Activated CD4-positive, alpha-beta memory T cell treated with anti-CD3 and anti-CD28 coated beads for 36 hours (primary cell): ENCODE measurements at regions of chr6 and their contacts with region 1.

Region 1: GRCh38 chr6:31795616-31796298 is at the start of gene VARS1:
- DNase-seq: peak; percentile 91
- H3K4me3 Mint-ChIP-seq: peak within 1 kb of the TSS; percentile 98
- H3K27ac Mint-ChIP-seq: peak within 1 kb of the TSS; percentile 91
- H3K4me1 Mint-ChIP-seq: peaks cover 39% of the 10 kb centered on the region
- H3K27me3 Mint-ChIP-seq: no peaks in the 10 kb centered on the region
- total RNA-seq, gene VARS1: 141 to 153 TPM

Region 2: DNA sequence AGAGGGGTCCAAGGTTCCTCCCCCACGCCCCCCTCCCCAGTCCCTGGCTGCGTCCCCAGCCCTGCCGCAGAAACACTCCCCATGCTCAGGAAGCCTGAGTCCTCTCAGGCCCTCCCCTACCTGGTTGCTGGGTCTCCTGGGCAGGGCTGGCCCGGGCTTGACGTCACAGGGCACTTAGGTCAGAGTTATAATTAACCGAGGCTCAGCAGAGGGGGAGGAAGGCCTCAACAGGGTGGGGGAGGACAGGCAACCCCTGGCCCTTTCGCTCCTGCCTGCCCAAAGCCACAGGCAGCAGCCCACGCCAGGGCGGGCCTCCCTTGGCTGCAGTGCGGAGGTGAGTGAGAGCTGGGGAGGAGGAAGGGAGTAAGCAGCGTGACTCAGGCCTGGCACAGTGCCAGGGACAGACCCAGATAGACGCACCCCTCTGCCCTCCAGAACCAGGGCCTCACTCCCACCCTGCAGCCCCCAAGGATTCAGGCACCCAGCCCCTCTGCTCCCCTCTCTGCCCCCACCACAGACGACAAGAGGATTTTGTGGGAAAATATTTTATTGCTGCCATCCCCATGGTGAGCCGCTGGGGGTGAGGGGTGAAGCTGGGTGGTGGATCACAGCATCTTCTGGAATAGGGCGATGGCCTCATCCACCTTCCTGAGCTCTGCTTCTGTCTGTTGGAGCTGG is 18.6 kb before region 1 on chr6 and contains the start of gene VWA7:
- CTCF ChIA-PET with region 1: interaction called, 8 read pairs
- POLR2A ChIA-PET with region 1: interaction called, 4 read pairs
- intact Hi-C with region 1: loop called (anchors 2 kb)
- DNase-seq: peak; percentile 91
- H3K4me3 Mint-ChIP-seq: peak within 1 kb of the TSS; percentile 26
- H3K27ac Mint-ChIP-seq: peak within 1 kb of the TSS; percentile 74
- H3K4me1 Mint-ChIP-seq: peaks cover 36% of the 10 kb centered on the region
- H3K27me3 Mint-ChIP-seq: no peaks in the 10 kb centered on the region
- total RNA-seq, gene VWA7: 2.0 to 2.1 TPM

Region 3: GRCh38 chr6:31806465-31807272 is 10.9 kb after region 1 on chr6 and contains the start of gene LSM2:
- CTCF ChIA-PET with region 1: interaction called, 30 read pairs
- POLR2A ChIA-PET with region 1: interaction called, 21 read pairs
- intact Hi-C with region 1: loop called (anchors 1 kb)
- DNase-seq: peak; percentile 98
- H3K4me3 Mint-ChIP-seq: peak within 1 kb of the TSS; percentile 86
- H3K27ac Mint-ChIP-seq: peak within 1 kb of the TSS; percentile 87
- H3K4me1 Mint-ChIP-seq: peaks cover 30% of the 10 kb centered on the region
- H3K27me3 Mint-ChIP-seq: no peaks in the 10 kb centered on the region
- total RNA-seq, gene LSM2: 142 to 143 TPM

Region 4: DNA sequence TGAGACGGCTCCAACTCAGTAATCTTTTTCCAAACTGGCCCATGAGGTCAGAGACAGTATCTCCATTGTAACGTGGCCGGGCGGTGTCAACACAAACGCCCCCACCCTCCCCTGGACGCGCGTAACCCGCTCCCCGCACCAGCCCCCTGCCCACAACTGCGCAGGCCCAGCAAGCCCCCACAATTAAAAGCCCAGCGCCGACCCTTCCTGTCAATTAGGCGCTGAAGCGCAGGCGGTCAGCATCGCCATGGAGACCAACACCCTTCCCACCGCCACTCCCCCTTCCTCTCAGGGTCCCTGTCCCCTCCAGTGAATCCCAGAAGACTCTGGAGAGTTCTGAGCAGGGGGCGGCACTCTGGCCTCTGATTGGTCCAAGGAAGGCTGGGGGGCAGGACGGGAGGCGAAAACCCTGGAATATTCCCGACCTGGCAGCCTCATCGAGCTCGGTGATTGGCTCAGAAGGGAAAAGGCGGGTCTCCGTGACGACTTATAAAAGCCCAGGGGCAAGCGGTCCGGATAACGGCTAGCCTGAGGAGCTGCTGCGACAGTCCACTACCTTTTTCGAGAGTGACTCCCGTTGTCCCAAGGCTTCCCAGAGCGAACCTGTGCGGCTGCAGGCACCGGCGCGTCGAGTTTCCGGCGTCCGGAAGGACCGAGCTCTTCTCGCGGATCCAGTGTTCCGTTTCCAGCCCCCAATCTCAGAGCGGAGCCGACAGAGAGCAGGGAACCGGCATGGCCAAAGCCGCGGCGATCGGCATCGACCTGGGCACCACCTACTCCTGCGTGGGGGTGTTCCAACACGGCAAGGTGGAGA is 19.5 kb after region 1 on chr6 and contains the starts of genes HSPA1A and HSPA1L:
- CTCF ChIA-PET with region 1: interaction called, 8 read pairs
- POLR2A ChIA-PET with region 1: interaction called, 21 read pairs
- intact Hi-C with region 1: loop called (anchors 2 kb)
- DNase-seq: peak; percentile 82
- H3K4me3 Mint-ChIP-seq: peak within 1 kb of the TSS; percentile 85
- H3K27ac Mint-ChIP-seq: peak within 1 kb of the TSS; percentile 95
- H3K4me1 Mint-ChIP-seq: peaks cover 57% of the 10 kb centered on the region
- H3K27me3 Mint-ChIP-seq: no peaks in the 10 kb centered on the region
- total RNA-seq, gene HSPA1A: 68.5 to 69.9 TPM
- total RNA-seq, gene HSPA1L: 2.0 TPM